AG04449 (cell line): ENCODE measurements at regions of chr3 and their contacts with region 1.

Region 1: DNA sequence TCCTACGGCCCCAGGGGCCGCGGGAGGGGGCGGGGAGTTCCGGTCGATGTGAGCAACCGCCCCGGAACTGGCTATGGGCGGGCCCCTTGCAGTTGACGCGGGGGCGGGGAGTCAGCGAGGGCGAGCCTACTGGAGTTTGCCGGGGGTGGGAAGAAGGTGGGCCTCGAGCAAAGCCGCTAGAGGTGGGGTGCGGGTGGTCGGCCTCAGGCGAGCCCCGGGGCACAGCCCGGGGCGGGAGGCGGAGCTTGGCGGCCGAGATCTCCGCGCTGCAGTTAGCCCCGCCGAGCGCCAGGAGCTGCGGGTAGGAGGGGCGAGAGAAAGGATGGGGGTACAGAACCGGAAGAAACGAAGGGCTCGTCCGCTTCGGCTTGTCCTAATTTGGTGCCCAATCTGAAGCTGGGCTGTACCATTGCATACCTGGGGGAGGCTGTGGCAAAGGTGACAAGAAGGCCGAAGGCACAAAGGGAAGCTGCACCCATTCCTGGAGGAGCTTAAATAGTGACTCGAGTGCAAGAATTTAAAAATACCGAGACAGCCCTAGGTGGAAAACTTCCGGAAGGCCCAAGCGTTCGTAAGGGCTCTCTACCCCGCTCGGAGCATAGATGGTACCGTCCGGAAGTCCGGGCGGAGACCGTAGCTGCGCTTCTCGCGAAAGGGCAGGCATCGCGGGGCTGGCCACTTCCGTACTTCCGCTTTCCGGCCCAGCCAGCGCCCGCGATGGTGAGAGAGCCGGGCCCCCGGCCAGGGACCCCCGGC is at the starts of genes ARPC4 and TADA3:
- DNase-seq: peak; percentile 86
- H3K4me3 ChIP-seq: peak within 1 kb of the TSS; percentile 99
- CTCF ChIP-seq: peak; percentile 8

Region 2: DNA sequence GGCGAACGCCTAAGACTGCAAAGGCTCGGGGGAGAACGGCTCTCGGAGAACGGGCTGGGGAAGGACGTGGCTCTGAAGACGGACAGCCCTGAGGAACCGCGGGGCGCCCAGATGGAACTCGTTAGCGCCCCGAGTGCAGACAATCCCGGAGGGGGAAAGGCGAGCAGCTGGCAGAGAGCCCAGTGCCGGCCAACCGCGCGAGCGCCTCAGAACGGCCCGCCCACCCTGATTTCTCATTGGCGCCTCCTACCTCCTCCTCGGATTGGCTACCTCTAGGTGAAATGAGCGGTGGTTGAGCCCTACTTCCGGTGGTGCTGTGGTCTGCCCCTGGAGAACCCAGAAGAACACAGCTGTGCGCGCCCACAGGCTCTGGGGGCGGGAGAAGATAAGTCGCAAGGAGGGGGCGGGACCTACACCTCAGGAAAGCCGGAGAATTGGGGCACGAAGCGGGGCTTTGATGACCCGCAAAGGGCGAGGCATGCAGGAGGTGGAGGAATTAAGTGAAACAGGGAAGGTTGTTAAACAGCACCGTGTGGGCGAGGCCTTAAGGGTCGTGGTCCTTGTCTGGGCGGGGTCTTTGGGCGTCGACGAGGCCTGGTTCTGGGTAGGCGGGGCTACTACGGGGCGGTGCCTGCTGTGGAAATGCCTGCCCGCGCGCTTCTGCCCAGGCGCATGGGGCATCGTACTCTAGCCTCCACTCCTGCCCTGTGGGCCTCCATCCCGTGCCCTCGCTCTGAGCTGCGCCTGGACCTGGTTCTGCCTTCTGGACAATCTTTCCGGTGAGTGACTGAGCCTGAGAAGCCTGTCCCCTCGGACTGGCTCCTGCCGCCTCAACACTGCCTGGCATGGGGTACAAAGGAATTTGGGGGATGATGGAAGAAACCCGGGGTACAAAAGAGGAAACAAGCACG is 42.7 kb before region 1 on chr3 and contains the start of gene OGG1:
- CTCF ChIA-PET with region 1: interaction called, 4 read pairs
- POLR2A ChIA-PET with region 1: interaction called, 10 read pairs
- DNase-seq: peak; percentile 84
- H3K4me3 ChIP-seq: peak within 1 kb of the TSS; percentile 92
- CTCF ChIP-seq: no peak

Region 3: DNA sequence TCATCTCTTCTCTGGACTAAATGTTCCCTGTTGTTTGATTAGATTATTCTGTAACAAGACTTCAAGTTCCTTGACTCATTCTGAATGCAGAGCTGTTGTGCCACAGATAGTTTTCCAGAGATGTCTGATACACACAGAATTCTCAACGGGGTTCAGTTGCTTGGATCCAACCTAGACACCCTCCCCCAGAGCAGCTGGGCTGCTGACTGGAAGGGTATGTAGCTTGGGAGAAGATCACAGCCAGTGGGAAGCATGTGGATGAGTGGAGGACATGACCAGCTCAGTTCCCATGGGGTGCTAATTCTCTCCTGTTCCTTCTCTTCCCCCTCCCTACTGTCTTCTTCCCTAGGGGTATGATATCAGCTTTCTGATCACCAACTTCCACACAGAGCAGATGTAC is 10.9 kb after region 1 on chr3:
- CTCF ChIA-PET with region 1: interaction called, 9 read pairs
- POLR2A ChIA-PET with region 1: interaction called, 13 read pairs
- DNase-seq: no peak
- H3K4me3 ChIP-seq: no peak overlapping the region
- CTCF ChIP-seq: no peak